ENCODE measurements at regions of chr6 and their contacts with region 1.

Region 1: DNA sequence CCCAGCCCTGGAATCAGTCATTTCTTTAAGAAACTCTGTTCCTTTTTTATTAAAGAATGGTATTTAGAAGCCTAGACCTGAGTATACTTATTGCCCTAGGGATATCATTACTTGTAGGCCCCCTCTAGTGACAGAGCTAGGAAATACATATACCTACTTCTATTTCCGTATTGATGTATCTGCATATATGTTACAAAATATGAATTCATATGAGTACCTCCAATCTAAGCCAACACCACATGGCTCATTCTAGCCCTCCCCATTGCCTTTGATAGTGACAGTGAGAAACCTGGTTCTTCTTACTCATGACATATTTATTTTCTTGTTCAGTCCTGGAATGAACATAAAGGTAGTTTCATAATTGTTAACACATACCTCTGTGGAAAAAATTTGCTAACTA is 137.2 kb downstream of the FARS2 start:
- DNase-seq: no peak
- ATAC-seq: no peak
- H3K4me3 ChIP-seq: no peak overlapping the region
- H3K27ac ChIP-seq: no peak overlapping the region
- H3K4me1 ChIP-seq: peaks cover 0 to 7% (median 0%) of the 10 kb centered on the region in 12 donors
- H3K27me3 ChIP-seq: no peaks in the 10 kb centered on the region
- CTCF ChIP-seq: peak; percentile 28 to 61 (median 43)
- POLR2A ChIP-seq: no peak

Region 2: GRCh38 chr6:5061152-5061551 is 337.4 kb before region 1 on chr6:
- intact Hi-C with region 1: loop called in 6 of 10 experiments (anchors 5 to 10 kb)
- DNase-seq: no peak
- ATAC-seq: no peak
- H3K4me3 ChIP-seq: no peak overlapping the region
- H3K27ac ChIP-seq: no peak overlapping the region
- H3K4me1 ChIP-seq: no peaks in the 10 kb centered on the region
- H3K27me3 ChIP-seq: no peaks in the 10 kb centered on the region
- CTCF ChIP-seq: no peak
- POLR2A ChIP-seq: no peak

Region 3: DNA sequence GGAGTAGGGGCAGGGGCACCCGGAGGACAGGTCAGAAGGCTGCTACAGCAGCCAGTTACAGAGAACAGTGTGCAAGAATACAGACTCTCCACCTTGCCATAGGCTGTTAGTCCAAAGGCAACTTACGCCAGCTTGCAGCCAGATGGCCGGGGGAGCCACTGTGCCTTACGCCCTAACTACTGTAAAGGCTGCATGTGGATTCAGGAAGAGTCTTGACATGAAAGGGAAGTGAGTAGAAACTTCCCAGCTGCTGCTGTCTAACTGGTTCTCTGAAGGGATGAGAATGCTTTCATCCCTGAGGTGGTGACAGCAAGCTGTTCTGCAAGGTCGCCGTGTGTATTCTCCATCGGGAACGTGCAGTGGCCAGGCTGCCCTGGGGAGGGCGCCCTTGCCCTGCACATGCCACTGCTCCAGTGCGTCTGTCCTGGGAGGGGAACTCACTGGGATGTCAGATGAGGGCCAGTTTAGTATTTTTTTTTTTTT is 183.9 kb before region 1 on chr6:
- intact Hi-C with region 1: loop called in 6 of 10 experiments (anchors 2 to 10 kb)
- DNase-seq: peak in 4 of 5 donors; percentile 39 to 72 (median 55)
- ATAC-seq: peak; percentile 86 to 94 (median 90)
- H3K4me3 ChIP-seq: peak overlapping the region in 1 of 12 donors; percentile 16
- H3K27ac ChIP-seq: peak overlapping the region in 5 of 12 donors; percentile 11 to 36 (median 17)
- H3K4me1 ChIP-seq: peaks cover 0 to 34% (median 15%) of the 10 kb centered on the region in 12 donors
- H3K27me3 ChIP-seq: no peaks in the 10 kb centered on the region
- CTCF ChIP-seq: peak; percentile 51 to 77 (median 70)
- POLR2A ChIP-seq: no peak